ENCODE measurements at regions of chr6 and their contacts with region 1.

Region 1: GRCh38 chr6:20534295-20535262 is at the start of gene CDKAL1:
- DNase-seq: peak; percentile 81 to 94 (median 86)
- ATAC-seq: peak; percentile 87
- H3K4me3 ChIP-seq: peak within 1 kb of the TSS; percentile 86
- H3K4me3 Mint-ChIP-seq: peak within 1 kb of the TSS; percentile 99
- H3K27ac ChIP-seq: peak within 1 kb of the TSS; percentile 74 to 86
- H3K27ac Mint-ChIP-seq: peak within 1 kb of the TSS; percentile 98
- H3K4me1 ChIP-seq: peaks cover 3% of the 10 kb centered on the region
- H3K4me1 Mint-ChIP-seq: peaks cover 43% of the 10 kb centered on the region
- H3K27me3 ChIP-seq: no peaks in the 10 kb centered on the region
- H3K27me3 Mint-ChIP-seq: peaks cover 6% of the 10 kb centered on the region
- CTCF ChIP-seq: no peak
- total RNA-seq, gene CDKAL1: 21.3 to 23.9 TPM

Region 2: DNA sequence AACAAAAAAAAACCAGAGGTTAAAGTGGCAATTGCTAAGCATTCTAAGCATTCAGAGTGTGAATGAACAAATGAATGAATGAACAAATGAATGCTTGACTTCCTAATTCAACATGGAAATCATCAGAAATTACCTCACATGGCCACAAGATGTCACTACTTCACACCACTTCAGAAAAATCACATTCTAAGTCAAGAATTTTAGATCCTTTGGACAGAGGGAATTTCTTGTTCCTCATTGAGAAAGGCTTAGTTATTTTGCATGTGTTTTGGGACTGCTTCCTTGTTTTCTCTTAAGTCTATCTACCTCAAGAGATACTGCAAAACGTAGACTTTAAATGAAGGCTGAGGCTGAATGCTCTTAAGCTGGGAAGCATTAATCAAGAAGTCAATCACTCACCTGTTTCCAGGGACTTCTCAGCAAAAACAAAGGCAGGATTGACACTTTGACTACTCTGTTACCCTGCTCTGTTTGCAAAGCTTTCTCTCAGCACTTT is 442.5 kb before region 1 on chr6:
- CTCF ChIA-PET with region 1: no interaction called
- POLR2A ChIA-PET with region 1: no interaction called
- intact Hi-C with region 1: loop called in 1 of 2 experiments (anchors 2 kb)
- DNase-seq: peak in 4 of 14 experiments; percentile 10 to 57 (median 42)
- ATAC-seq: peak; percentile 32
- H3K4me3 ChIP-seq: no peak overlapping the region
- H3K4me3 Mint-ChIP-seq: no peak overlapping the region
- H3K27ac ChIP-seq: no peak overlapping the region
- H3K27ac Mint-ChIP-seq: no peak overlapping the region
- H3K4me1 ChIP-seq: no peaks in the 10 kb centered on the region
- H3K4me1 Mint-ChIP-seq: no peaks in the 10 kb centered on the region
- H3K27me3 ChIP-seq: no peaks in the 10 kb centered on the region
- H3K27me3 Mint-ChIP-seq: no peaks in the 10 kb centered on the region
- CTCF ChIP-seq: peak; percentile 79

Region 3: DNA sequence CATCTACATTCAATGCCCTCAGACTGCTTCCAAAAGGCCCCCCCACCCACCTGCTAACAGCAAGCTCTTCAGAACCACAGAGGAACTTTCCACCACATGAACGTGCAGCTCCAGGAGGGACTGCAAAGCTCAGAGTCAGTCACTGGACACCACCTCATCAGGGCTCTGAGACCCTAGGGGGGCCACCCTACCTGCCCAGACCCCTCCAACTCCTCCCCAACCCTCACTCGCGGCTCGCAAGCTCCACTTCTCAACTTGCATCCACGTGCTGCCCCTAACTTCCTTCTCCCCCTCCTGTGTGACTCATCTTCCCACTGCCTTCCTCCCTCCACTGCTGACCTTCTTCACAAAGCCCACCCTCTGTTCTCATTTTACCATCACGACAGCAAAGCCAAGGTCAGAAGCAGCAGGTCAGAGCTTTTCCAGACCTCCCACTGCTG is 328.8 kb before region 1 on chr6:
- CTCF ChIA-PET with region 1: no interaction called
- POLR2A ChIA-PET with region 1: no interaction called
- intact Hi-C with region 1: loop called in 1 of 2 experiments (anchors 5 kb)
- DNase-seq: peak in 3 of 14 experiments; percentile 4 to 47 (median 39)
- ATAC-seq: no peak
- H3K4me3 ChIP-seq: no peak overlapping the region
- H3K4me3 Mint-ChIP-seq: peak overlapping the region; percentile 57
- H3K27ac ChIP-seq: peak overlapping the region; percentile 35 to 62
- H3K27ac Mint-ChIP-seq: peak overlapping the region; percentile 88
- H3K4me1 ChIP-seq: peaks cover 57% of the 10 kb centered on the region
- H3K4me1 Mint-ChIP-seq: peaks cover 89% of the 10 kb centered on the region
- H3K27me3 ChIP-seq: no peaks in the 10 kb centered on the region
- H3K27me3 Mint-ChIP-seq: no peaks in the 10 kb centered on the region
- CTCF ChIP-seq: no peak